ENCODE measurements at regions of chr7 and their contacts with region 1.

Region 1: GRCh38 chr7:44200647-44201461 is at the start of gene YKT6:
- H3K4me3 Mint-ChIP-seq: peak within 1 kb of the TSS; percentile 87
- H3K27ac Mint-ChIP-seq: peak within 1 kb of the TSS; percentile 91
- H3K4me1 Mint-ChIP-seq: peaks cover 28% of the 10 kb centered on the region
- H3K27me3 Mint-ChIP-seq: peaks cover 10% of the 10 kb centered on the region

Region 2: DNA sequence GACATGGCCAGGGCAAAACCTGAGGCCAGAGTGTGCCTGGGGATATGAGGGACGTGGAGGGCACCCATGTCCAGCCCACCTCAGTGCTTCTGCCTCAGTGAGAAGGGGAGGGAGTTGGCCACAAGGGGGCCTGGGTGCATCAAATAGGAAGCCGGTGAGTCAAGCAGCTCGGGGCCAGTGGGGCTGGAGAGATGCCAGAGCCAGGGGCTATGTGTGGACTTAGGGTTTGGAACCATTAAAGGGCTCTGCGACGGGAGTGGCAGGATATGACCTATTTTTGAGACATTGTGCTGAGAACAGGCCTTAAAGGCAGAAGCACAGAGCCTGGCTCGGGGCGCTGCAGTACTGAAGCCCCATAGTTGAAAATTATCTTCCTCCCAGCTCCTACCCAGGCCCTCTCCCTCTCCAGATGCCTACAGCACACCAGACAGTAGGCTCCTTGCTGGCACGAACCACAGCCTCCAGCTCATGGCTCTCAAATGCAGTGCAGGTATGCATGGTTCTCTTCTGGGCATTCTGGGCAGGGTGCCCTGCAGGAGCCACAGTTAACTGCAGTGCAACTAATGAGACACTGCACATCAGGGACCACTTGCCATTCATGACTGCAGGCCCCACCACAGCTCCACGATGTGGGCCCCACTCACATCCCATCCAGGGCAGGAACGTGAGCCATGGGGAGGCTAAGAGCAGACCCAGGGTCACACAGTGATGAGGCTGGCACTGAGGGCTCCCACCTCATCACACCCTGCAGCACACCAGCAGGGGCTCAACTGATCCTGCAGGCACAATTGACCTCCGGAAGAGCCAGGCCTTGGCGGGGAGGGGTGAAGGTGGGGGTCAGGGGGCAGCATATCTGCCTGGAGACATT is 128.3 kb before region 1 on chr7:
- intact Hi-C with region 1: loop called (anchors 1 kb)
- H3K4me3 Mint-ChIP-seq: no peak overlapping the region
- H3K27ac Mint-ChIP-seq: peak overlapping the region; percentile 93
- H3K4me1 Mint-ChIP-seq: peaks cover 67% of the 10 kb centered on the region
- H3K27me3 Mint-ChIP-seq: no peaks in the 10 kb centered on the region

Region 3: DNA sequence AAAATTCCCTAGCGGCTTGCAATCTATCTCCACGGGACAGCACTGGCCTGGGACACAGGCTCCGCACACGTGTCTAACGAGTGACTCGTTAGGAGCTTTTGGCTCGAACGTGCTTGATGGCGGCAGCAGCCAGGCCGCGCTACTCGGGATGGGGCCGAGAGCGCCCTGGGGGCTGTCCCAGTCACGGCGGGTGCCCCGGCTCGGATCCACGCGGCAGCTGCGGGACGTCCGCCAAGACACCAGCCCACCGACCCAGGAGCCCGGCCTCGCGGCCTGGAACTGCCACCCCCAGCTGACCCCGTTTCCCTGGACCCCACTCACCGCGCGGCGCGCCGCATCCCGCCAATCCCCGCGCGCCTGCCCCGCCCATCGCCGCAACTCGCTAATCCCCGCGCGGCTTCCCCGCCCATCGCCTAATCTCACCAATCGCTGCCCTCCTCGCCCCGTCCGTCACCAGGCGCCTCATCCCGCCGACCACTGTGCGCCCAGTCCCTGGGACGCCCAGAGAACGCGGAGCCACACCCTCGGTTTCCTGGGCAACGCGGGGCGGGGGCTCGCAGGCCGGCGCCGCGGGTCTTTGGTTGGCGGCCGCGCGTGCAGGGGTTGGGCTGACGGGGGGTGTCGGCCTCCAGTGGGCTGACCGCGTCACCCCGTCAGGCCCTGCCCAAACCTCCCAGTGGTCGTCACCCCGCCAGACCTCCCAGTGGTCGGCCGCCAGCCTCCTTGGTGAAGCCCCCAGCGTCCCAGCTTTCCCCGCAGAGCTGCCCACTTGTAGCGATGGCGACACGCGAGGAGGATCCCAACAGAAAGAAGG is 77.5 kb before region 1 on chr7 and contains the start of gene POLD2:
- intact Hi-C with region 1: loop called (anchors 2 kb)
- H3K4me3 Mint-ChIP-seq: peak within 1 kb of the TSS; percentile 73
- H3K27ac Mint-ChIP-seq: peak within 1 kb of the TSS; percentile 77
- H3K4me1 Mint-ChIP-seq: peaks cover 39% of the 10 kb centered on the region
- H3K27me3 Mint-ChIP-seq: peaks cover 3% of the 10 kb centered on the region

Measured in dendritic cell treated with granulocyte-macrophage colony-stimulating factor and Interleukin-4, amounts not matched to agents 40 ng/mL and 50 ng/mL, for 4 days (primary cell).